CD4-positive, alpha-beta memory T cell (primary cell): ENCODE measurements at regions of chr19 and their contacts with region 1.

Region 1: DNA sequence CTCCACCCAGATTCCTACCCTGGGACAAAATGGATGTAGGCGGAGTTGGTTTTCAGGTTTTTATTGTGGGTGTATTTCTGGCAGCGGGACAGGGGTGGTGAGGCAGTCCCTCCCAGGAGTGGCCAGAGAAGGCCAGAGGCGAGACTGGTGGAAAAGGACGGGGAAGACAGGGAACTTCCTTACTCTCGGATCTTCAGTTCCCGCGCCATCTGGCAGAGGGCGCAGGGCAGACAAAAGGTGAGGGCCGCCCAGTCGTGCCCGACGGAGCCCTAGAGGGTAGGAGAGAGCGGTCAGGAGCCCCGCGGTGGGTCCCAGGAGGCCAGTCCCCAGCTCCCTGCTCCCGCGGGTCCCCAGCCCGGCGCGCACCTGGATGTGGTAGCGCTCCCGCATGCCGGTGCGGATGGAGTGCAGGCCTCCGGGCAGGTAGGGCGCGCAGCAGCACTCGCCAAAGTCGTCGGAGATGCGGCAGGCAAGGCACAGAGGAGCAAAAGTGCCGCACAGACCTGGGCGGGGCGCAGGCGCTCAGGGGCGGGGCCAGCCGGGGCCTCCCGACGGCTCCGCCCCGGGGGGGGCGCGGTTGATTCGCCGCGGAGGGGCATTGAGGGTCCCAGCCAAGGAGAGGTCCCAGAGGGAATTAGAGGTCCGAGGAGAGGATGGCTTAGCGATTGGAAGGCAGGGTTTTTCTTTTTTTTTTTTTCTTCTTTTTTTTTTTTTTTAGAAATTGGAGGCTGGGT is 3.0 kb downstream of the CNFN start:
- DNase-seq: peak; percentile 62 to 72 (median 66)
- H3K4me3 ChIP-seq: peak overlapping the region in 1 of 2 donors; percentile 45
- H3K4me3 Mint-ChIP-seq: peak overlapping the region; percentile 42 to 80 (median 68)
- H3K27ac ChIP-seq: no peak overlapping the region
- H3K27ac Mint-ChIP-seq: peak overlapping the region in 4 of 7 donors; percentile 35 to 73 (median 55)
- H3K4me1 ChIP-seq: peaks cover 10% of the 10 kb centered on the region
- H3K4me1 Mint-ChIP-seq: peaks cover 4 to 7% (median 6%) of the 10 kb centered on the region in 4 donors
- H3K27me3 ChIP-seq: no peaks in the 10 kb centered on the region
- H3K27me3 Mint-ChIP-seq: peaks cover 24 to 26% of the 10 kb centered on the region in 2 donors

Region 2: GRCh38 chr19:42433503-42434260 is 46.5 kb after region 1 on chr19:
- CTCF ChIA-PET with region 1: interaction called, 5 read pairs
- POLR2A ChIA-PET with region 1: no interaction called
- intact Hi-C with region 1: loop called (anchors 1 kb)
- DNase-seq: peak; percentile 58 to 70 (median 62)
- H3K4me3 ChIP-seq: no peak overlapping the region
- H3K4me3 Mint-ChIP-seq: no peak overlapping the region
- H3K27ac ChIP-seq: no peak overlapping the region
- H3K27ac Mint-ChIP-seq: peak overlapping the region in 3 of 7 donors; percentile 35 to 57 (median 42)
- H3K4me1 ChIP-seq: peaks cover 3% of the 10 kb centered on the region
- H3K4me1 Mint-ChIP-seq: peaks cover 3 to 6% (median 5%) of the 10 kb centered on the region in 4 donors
- H3K27me3 ChIP-seq: no peaks in the 10 kb centered on the region
- H3K27me3 Mint-ChIP-seq: no peaks in the 10 kb centered on the region